ENCODE measurements at regions of chr12 and their contacts with region 1.

Region 1: DNA sequence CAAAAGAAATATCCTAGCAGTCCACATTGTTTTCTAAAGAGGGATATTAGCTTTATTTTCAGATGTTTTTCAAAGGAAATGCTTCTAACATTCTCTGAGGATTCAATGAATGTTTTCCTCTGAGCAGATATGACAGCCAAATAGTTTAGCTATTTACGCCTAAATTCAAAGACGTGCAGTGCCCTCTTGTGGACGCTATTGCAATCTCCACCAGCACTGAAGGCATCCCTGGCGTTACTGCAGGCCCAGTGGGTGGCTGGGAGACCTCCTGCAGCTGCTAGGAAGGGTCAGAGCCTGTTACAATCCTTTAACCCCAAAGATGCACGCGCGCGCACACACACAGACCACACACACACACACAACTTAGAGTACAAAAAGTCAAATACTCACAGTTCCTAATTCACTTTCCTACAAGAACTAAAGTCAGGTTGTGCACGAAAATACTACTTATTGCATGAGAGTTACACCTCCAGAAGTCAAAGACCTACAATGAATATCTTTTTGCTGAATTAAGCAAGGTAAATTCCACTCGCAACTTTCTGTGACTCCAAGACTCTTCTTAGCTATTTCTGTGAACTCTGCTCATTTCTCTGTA is 589.3 kb upstream of the TMEM132C start:
- DNase-seq: peak; percentile 63 to 92 (median 80)
- H3K4me3 ChIP-seq: no peak overlapping the region
- H3K27ac ChIP-seq: no peak overlapping the region
- H3K4me1 ChIP-seq: no peaks in the 10 kb centered on the region
- H3K27me3 ChIP-seq: no peaks in the 10 kb centered on the region
- CTCF ChIP-seq: peak; percentile 67 to 85 (median 74)
- POLR2A ChIP-seq: no peak

Region 2: DNA sequence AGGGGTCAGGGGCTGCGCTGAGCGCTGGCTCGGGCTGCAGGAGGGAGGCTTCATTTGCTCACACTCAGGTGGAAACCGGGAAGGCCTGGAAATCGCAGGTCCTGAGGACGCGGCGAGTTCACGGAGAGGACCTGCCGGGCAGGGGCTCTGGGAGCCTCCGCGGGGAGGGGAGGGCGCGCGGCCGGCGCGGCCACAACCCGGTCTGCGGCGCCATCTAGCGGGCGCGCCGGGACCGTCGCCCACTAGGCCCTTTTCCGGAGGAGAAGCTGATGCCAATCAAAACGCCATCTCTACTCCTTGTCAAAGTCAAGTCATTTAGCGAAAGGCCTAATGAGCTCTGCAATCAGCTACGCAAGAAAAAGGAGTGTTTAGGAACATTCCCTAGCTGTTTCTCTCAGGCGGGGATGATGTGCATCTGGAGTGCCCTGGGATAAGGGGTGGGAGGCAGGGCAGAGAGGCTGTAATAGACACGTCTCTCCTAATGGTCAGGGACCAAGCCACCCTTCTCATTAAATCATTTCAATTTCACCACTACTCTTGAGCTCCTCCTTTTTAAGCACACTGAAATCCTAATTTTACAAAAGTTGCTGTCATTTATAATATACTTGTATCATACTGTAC is 296.5 kb before region 1 on chr12:
- intact Hi-C with region 1: loop called in 1 of 2 experiments (anchors 10 kb)
- DNase-seq: peak in 5 of 7 donors; percentile 14 to 42 (median 25)
- H3K4me3 ChIP-seq: peak overlapping the region in 1 of 4 donors; percentile 33
- H3K27ac ChIP-seq: no peak overlapping the region
- H3K4me1 ChIP-seq: no peaks in the 10 kb centered on the region
- H3K27me3 ChIP-seq: no peaks in the 10 kb centered on the region
- CTCF ChIP-seq: peak; percentile 49 to 86 (median 62)
- POLR2A ChIP-seq: no peak

Region 3: GRCh38 chr12:127613056-127613455 is 64.6 kb before region 1 on chr12:
- intact Hi-C with region 1: no loop called
- DNase-seq: peak; percentile 56 to 90 (median 67)
- H3K4me3 ChIP-seq: no peak overlapping the region
- H3K27ac ChIP-seq: peak overlapping the region in 2 of 5 donors; percentile 62 to 66
- H3K4me1 ChIP-seq: peaks cover 0 to 5% of the 10 kb centered on the region in 2 donors
- H3K27me3 ChIP-seq: no peaks in the 10 kb centered on the region
- CTCF ChIP-seq: no peak
- POLR2A ChIP-seq: no peak

Region 4: GRCh38 chr12:127888943-127889719 is 211.5 kb after region 1 on chr12:
- intact Hi-C with region 1: no loop called
- DNase-seq: peak in 4 of 7 donors; percentile 3 to 72 (median 24)
- H3K4me3 ChIP-seq: no peak overlapping the region
- H3K27ac ChIP-seq: no peak overlapping the region
- H3K4me1 ChIP-seq: no peaks in the 10 kb centered on the region
- H3K27me3 ChIP-seq: no peaks in the 10 kb centered on the region
- CTCF ChIP-seq: no peak
- POLR2A ChIP-seq: no peak

Region 5: DNA sequence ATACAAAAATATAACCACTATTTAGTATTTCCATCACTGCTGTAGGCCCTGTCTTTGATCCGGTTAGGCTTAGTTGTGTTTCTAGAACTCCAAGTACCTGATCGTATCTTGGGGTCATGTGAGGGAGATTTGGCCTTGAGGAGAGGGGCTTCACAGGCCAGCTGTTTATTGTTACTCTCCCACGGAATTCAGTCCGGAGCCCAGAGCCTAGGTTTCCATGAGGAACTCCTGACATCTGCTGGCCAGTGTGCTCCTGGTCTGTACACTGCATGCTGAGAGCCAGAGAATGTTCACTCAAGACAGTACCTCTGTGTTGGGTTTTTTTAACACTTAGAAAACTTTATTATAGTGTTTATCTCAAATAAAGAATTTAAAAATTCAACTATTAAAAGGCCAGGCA is 248.3 kb after region 1 on chr12:
- intact Hi-C with region 1: loop called in 1 of 2 experiments (anchors 10 kb)
- DNase-seq: peak; percentile 51 to 80 (median 67)
- H3K4me3 ChIP-seq: no peak overlapping the region
- H3K27ac ChIP-seq: peak overlapping the region in 1 of 5 donors; percentile 55
- H3K4me1 ChIP-seq: peaks cover 5 to 31% of the 10 kb centered on the region in 2 donors
- H3K27me3 ChIP-seq: no peaks in the 10 kb centered on the region
- CTCF ChIP-seq: peak; percentile 26 to 67 (median 56)
- POLR2A ChIP-seq: no peak

Region 6: DNA sequence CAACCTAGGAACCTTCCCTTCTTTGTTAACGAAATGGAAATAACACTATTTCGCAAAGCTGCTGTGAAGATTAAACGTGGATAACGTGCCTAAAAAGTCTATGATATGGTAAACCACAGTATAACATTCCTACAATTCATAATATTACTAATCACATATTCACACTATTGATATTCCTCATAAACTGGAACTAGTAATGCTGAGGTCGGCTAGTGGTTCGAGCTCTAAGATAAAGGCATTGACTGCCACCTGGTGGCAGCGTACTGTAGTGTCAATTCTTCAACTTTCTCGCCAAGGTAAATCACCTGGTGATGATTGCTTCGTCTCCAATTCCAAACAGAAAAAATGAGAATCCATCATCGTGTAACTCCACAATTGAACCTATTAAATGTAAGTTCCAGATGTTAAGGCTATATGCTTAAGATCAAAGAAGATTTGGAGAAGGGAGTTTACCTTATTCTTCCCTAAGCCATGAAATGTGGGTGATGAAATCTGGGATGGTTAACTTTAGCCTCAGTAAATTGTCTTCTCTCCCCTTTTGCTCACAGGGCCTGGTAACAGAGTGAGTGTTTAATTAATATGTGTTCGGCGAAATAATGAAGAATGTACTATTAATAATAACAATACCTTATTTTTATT is 391.8 kb after region 1 on chr12:
- intact Hi-C with region 1: loop called in 1 of 2 experiments (anchors 10 kb)
- DNase-seq: peak; percentile 33 to 77 (median 62)
- H3K4me3 ChIP-seq: no peak overlapping the region
- H3K27ac ChIP-seq: no peak overlapping the region
- H3K4me1 ChIP-seq: no peaks in the 10 kb centered on the region
- H3K27me3 ChIP-seq: no peaks in the 10 kb centered on the region
- CTCF ChIP-seq: peak; percentile 72 to 79 (median 74)
- POLR2A ChIP-seq: no peak